H1 (cell line): ENCODE measurements at regions of chr3 and their contacts with region 1.

Region 1: DNA sequence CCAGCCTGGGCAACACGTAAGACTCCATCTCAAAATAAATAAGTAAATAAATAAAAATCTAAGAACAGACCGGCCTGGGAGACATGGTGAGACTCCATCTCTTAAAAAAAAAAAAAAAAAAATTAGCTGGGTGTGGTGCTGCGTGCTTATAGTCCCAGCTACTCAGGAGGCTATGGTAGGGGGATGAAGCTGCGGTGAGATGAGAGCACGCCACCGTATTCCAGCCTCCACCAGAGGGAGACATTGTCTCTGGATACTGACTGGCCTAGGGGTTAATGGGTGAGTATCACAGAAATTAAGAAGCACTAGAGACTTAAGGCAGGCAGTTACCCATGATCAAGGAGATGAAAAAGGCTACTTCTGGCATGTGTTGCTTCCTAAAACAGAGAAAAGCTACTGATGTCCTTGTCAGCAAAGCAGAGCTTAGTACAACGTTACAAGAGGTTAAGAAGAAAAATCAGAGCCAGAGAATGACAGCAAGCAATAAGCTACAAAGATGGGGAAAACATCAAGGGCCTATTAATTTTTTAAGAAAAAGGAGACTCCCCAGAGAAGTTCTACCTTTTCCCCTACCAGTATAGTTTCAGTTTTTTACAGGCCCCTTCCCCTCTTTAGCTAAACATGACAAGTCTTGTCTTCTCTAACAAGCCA is 8.6 kb downstream of the TFRC start:
- DNase-seq: peak in 1 of 2 experiments; percentile 69
- H3K4me3 ChIP-seq: no peak overlapping the region
- H3K27ac ChIP-seq: no peak overlapping the region
- H3K4me1 ChIP-seq: no peaks in the 10 kb centered on the region
- H3K27me3 ChIP-seq: no peaks in the 10 kb centered on the region
- CTCF ChIP-seq: peak; percentile 81 to 87 (median 85)
- EP300 ChIP-seq: no peak
- POLR2A ChIP-seq: no peak
- RAD21 ChIP-seq: peak; percentile 93 to 94

Region 2: GRCh38 chr3:196023947-196024346 is 49.4 kb before region 1 on chr3:
- CTCF ChIA-PET with region 1: interaction called, 11 read pairs
- POLR2A ChIA-PET with region 1: no interaction called
- DNase-seq: no peak
- H3K4me3 ChIP-seq: no peak overlapping the region
- H3K27ac ChIP-seq: no peak overlapping the region
- H3K4me1 ChIP-seq: no peaks in the 10 kb centered on the region
- H3K27me3 ChIP-seq: no peaks in the 10 kb centered on the region
- CTCF ChIP-seq: no peak
- EP300 ChIP-seq: no peak
- POLR2A ChIP-seq: no peak
- RAD21 ChIP-seq: no peak

Region 3: DNA sequence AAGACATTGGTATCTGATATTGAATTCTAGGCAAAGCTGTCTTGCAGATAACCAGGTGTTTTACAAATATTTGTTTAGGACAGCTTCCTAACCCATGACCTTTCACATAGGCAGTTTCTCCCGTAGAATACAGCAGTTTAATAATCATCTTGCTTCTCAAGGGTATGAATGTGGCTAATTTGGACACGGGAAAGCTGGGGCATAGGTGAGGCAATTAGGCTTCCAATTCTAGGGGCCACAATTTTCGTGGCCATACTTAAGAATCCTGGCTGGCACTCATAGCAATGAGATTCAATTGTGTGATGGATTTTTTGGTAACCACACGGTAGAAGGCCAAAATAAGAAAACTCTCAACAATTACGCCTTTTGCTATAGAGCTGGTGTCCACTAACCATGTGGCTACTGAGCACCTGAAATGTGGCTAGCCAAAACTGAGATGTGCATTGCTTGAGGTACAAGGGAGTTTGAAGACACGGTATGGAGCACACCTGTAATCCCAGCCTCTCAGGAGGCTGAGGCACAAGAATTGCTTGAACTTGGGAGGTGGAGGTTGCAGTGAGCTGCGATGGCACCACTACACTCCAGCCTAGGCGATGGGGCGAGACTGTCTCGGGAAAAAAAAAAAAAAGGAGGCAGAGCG is 25.8 kb before region 1 on chr3:
- CTCF ChIA-PET with region 1: interaction called, 26 read pairs
- POLR2A ChIA-PET with region 1: interaction called, 3 read pairs
- DNase-seq: no peak
- H3K4me3 ChIP-seq: no peak overlapping the region
- H3K27ac ChIP-seq: no peak overlapping the region
- H3K4me1 ChIP-seq: no peaks in the 10 kb centered on the region
- H3K27me3 ChIP-seq: no peaks in the 10 kb centered on the region
- CTCF ChIP-seq: no peak
- EP300 ChIP-seq: no peak
- POLR2A ChIP-seq: peak in 1 of 2 experiments; percentile 33; a peak in 1 of 3 replicates
- RAD21 ChIP-seq: no peak

Region 4: GRCh38 chr3:196055683-196056270 is 17.5 kb before region 1 on chr3:
- CTCF ChIA-PET with region 1: interaction called, 26 read pairs
- POLR2A ChIA-PET with region 1: no interaction called
- DNase-seq: no peak
- H3K4me3 ChIP-seq: no peak overlapping the region
- H3K27ac ChIP-seq: peak overlapping the region; percentile 68
- H3K4me1 ChIP-seq: peaks cover 0 to 7% (median 4%) of the 10 kb centered on the region in 4 experiments; a peak in 5 of 7 replicates
- H3K27me3 ChIP-seq: no peaks in the 10 kb centered on the region
- CTCF ChIP-seq: no peak
- EP300 ChIP-seq: no peak
- POLR2A ChIP-seq: no peak
- RAD21 ChIP-seq: no peak

Region 5: DNA sequence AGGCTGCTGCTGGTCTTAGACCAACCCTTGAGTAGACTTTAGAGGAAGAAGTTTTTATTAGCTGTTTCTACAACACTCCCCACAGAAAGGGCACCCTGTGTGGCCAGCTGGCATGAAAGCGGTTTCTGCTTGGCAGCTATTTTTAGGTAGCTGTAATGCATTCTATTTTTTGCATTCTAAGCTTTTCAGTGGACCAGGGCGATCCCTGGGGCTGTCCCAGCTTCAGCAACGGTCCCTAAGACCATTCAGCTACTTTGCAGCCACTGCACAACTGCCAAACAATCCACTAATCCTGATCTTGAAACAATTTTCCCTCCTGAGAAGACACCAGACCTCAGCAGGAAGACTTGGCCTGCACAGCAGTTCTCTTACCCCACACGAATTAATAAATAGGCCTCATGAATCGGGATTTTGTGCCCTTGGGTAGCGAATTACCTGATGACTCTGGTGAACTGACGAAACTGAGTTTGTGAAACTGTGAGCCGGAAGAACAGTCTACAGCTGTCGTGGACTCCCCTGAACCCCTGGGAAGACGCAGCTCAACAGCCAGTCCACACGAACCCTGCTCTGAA is 23.2 kb after region 1 on chr3:
- CTCF ChIA-PET with region 1: interaction called, 35 read pairs
- POLR2A ChIA-PET with region 1: no interaction called
- DNase-seq: no peak
- H3K4me3 ChIP-seq: no peak overlapping the region
- H3K27ac ChIP-seq: no peak overlapping the region
- H3K4me1 ChIP-seq: no peaks in the 10 kb centered on the region
- H3K27me3 ChIP-seq: no peaks in the 10 kb centered on the region
- CTCF ChIP-seq: no peak
- EP300 ChIP-seq: no peak
- POLR2A ChIP-seq: no peak
- RAD21 ChIP-seq: no peak

Region 6: GRCh38 chr3:196108083-196108743 is 34.9 kb after region 1 on chr3:
- CTCF ChIA-PET with region 1: interaction called, 16 read pairs
- POLR2A ChIA-PET with region 1: interaction called, 6 read pairs
- DNase-seq: peak; percentile 39 to 64
- H3K4me3 ChIP-seq: no peak overlapping the region
- H3K27ac ChIP-seq: no peak overlapping the region
- H3K4me1 ChIP-seq: peaks cover 0 to 10% (median 6%) of the 10 kb centered on the region in 4 experiments; a peak in 5 of 7 replicates
- H3K27me3 ChIP-seq: no peaks in the 10 kb centered on the region
- CTCF ChIP-seq: peak in 1 of 3 experiments; percentile 0; a peak in 1 of 4 replicates
- EP300 ChIP-seq: no peak
- POLR2A ChIP-seq: no peak
- RAD21 ChIP-seq: no peak

Region 7: GRCh38 chr3:196186651-196187573 is 113.6 kb after region 1 on chr3:
- CTCF ChIA-PET with region 1: interaction called, 299 read pairs
- POLR2A ChIA-PET with region 1: no interaction called
- DNase-seq: peak; percentile 56 to 72
- H3K4me3 ChIP-seq: peak overlapping the region in 2 of 4 experiments; percentile 2 to 18; a peak in 3 of 8 replicates
- H3K27ac ChIP-seq: no peak overlapping the region
- H3K4me1 ChIP-seq: peaks cover 0 to 9% (median 6%) of the 10 kb centered on the region in 4 experiments; a peak in 6 of 7 replicates
- H3K27me3 ChIP-seq: no peaks in the 10 kb centered on the region
- CTCF ChIP-seq: no peak
- EP300 ChIP-seq: no peak
- POLR2A ChIP-seq: no peak; a peak in 1 of 3 replicates
- RAD21 ChIP-seq: no peak